Common myeloid progenitor, CD34-positive (primary cell): ENCODE measurements at regions of chr7 and their contacts with region 1.

Region 1: DNA sequence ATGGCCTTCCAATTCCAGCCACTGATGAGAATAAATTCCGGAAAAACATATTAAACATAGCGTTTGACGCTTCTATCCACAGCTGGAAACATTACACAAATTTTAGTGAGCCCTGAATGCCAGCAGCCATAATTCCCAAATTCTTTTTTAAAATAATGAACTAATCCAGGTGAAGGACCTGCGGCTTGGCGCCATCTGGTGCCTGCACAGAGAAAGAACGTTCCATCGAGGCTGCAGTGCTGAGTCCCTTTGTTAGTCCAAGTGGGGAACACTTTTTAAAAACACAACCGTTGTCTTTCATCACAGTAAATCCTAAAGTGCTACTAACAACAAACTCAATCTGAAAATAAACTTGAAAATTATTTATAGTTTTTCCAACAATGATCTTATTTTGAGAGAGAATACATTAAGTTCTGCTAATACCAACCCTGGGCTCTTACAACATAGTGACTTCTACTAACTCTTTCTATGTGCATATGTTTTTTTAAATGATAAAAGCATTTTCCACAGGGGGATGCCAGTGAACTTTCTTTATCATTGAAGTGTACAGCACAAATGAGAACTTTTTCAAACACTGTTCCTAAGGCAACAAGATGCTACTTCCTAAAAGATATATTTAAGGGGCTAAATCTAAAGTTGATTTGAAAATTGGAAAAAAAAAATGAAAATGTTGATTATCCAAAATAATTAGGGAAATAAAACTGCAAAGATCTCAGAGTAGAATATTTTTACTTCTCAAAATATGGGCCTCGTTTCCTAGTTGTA is 166.9 kb upstream of the RNF32 start:
- DNase-seq: peak; percentile 22 to 55 (median 46)
- H3K4me3 ChIP-seq: no peak overlapping the region
- H3K27ac ChIP-seq: no peak overlapping the region
- H3K4me1 ChIP-seq: no peaks in the 10 kb centered on the region
- H3K27me3 ChIP-seq: peaks cover 0 to 33% (median 3%) of the 10 kb centered on the region in 5 experiments

Region 2: GRCh38 chr7:155796381-155797261 is 677.0 kb before region 1 on chr7:
- CTCF ChIA-PET with region 1: interaction called, 15 read pairs
- POLR2A ChIA-PET with region 1: interaction called, 3 read pairs
- DNase-seq: peak in 2 of 3 donors; percentile 52 to 57
- H3K4me3 ChIP-seq: no peak overlapping the region
- H3K27ac ChIP-seq: no peak overlapping the region
- H3K4me1 ChIP-seq: peaks cover 4 to 21% (median 19%) of the 10 kb centered on the region in 4 experiments
- H3K27me3 ChIP-seq: peaks cover 4 to 67% (median 21%) of the 10 kb centered on the region in 5 experiments

Region 3: GRCh38 chr7:155811895-155812761 is 661.5 kb before region 1 on chr7 and contains the start of gene SHH:
- CTCF ChIA-PET with region 1: interaction called, 10 read pairs
- POLR2A ChIA-PET with region 1: no interaction called
- DNase-seq: peak in 2 of 3 donors; percentile 40 to 41
- H3K4me3 ChIP-seq: peak within 1 kb of the TSS in 4 of 7 experiments; percentile 3 to 53 (median 20)
- H3K27ac ChIP-seq: no peak within 1 kb of the TSS
- H3K4me1 ChIP-seq: peaks cover 0 to 38% (median 25%) of the 10 kb centered on the region in 4 experiments
- H3K27me3 ChIP-seq: peaks cover 0 to 98% (median 43%) of the 10 kb centered on the region in 5 experiments